ENCODE measurements at regions of chr12 and their contacts with region 1.

Region 1: GRCh38 chr12:68451261-68452077 is 119.3 kb upstream of the MDM1 start:
- DNase-seq: peak; percentile 55
- H3K4me3 Mint-ChIP-seq: peak overlapping the region; percentile 43
- H3K27ac Mint-ChIP-seq: peak overlapping the region; percentile 95
- H3K4me1 Mint-ChIP-seq: peaks cover 78% of the 10 kb centered on the region
- H3K27me3 Mint-ChIP-seq: no peaks in the 10 kb centered on the region

Region 2: GRCh38 chr12:68364893-68365725 is 86.4 kb before region 1 on chr12:
- intact Hi-C with region 1: loop called (anchors 1 kb)
- DNase-seq: peak; percentile 85
- H3K4me3 Mint-ChIP-seq: peak overlapping the region; percentile 61
- H3K27ac Mint-ChIP-seq: peak overlapping the region; percentile 84
- H3K4me1 Mint-ChIP-seq: peaks cover 42% of the 10 kb centered on the region
- H3K27me3 Mint-ChIP-seq: no peaks in the 10 kb centered on the region

Region 3: DNA sequence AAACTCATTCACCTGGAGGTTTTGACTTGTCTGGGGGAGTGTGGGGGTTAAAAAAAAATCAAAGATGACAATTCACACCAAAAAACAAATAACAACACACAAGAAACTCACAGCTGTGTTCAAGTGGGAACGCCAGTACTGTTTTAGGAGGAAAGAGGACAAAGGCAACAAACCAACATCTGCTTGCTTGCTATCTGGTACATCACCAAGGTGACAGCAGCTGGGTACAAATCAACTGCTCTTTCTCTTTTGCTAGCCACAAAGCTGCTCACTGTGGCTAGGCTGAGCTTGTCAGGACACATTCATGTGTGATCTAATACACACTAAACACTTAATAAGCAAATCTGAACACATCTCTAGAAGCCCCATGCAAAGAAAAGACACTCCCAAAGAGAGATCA is 31.2 kb after region 1 on chr12:
- intact Hi-C with region 1: loop called (anchors 1 kb)
- DNase-seq: peak; percentile 38
- H3K4me3 Mint-ChIP-seq: peak overlapping the region; percentile 9
- H3K27ac Mint-ChIP-seq: peak overlapping the region; percentile 93
- H3K4me1 Mint-ChIP-seq: peaks cover 42% of the 10 kb centered on the region
- H3K27me3 Mint-ChIP-seq: no peaks in the 10 kb centered on the region

Region 4: GRCh38 chr12:68565375-68565903 is 114.0 kb after region 1 on chr12:
- intact Hi-C with region 1: loop called (anchors 1 kb)
- DNase-seq: no peak
- H3K4me3 Mint-ChIP-seq: no peak overlapping the region
- H3K27ac Mint-ChIP-seq: peak overlapping the region; percentile 48
- H3K4me1 Mint-ChIP-seq: peaks cover 27% of the 10 kb centered on the region
- H3K27me3 Mint-ChIP-seq: no peaks in the 10 kb centered on the region

Region 5: DNA sequence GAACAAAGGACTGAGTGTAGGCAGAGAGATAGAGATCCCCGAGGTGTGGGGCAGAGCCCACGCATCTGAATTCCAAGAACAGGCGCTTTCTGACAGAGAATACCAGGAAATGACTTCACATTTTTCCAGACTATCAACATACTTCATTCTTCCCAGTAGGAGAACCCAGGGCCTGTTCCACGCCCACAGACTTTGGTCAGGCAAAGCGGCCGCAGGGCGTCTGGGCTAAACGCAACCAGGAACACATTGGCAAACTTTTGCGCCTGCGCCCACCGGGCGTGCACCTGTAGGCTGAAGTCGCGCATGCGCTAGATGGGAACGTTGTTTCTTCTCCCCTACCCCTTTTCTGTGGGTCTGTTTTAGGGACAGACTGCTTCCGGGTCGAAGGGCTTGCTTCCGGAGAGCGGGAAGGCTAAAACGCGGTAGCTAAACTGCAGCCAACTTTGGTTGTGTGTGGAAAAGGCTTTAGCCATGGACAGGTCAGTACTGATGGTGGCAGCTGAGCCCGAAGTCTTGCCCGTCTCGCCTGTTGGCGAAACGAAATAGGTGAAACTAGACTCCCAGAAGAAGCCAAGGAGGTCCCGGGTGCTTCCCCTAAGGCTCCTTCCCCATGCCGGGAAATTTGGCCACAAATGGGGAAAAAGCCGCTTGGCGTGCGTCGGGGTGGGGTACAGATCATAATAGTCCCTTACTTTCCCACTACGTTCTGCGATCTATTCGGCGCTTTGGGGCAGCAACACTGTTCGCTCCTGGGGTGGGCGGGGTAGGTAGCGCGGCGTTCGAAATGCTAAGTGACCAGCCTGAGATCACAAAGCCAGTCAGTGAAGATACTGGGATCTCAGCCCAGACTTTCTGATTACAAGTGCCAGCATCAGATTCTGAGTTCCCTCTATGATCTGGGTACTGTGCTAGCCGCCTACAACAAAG is 235.4 kb after region 1 on chr12 and contains the start of gene NUP107:
- intact Hi-C with region 1: loop called (anchors 2 kb)
- DNase-seq: peak; percentile 94
- H3K4me3 Mint-ChIP-seq: peak within 1 kb of the TSS; percentile 93
- H3K27ac Mint-ChIP-seq: peak within 1 kb of the TSS; percentile 93
- H3K4me1 Mint-ChIP-seq: peaks cover 31% of the 10 kb centered on the region
- H3K27me3 Mint-ChIP-seq: no peaks in the 10 kb centered on the region
- total RNA-seq, gene NUP107: 101 and 106 TPM in 2 replicates